ENCODE measurements at regions of chr5 and their contacts with region 1.

Region 1: GRCh38 chr5:111223889-111224563 is at the start of gene CAMK4:
- DNase-seq: peak; percentile 80 to 88 (median 84)
- H3K4me3 ChIP-seq: peak within 1 kb of the TSS; percentile 85
- H3K4me3 Mint-ChIP-seq: peak within 1 kb of the TSS; percentile 89 to 98 (median 98)
- H3K27ac ChIP-seq: peak within 1 kb of the TSS; percentile 52
- H3K27ac Mint-ChIP-seq: peak within 1 kb of the TSS; percentile 86 to 98 (median 94)
- H3K4me1 ChIP-seq: peaks cover 20% of the 10 kb centered on the region
- H3K4me1 Mint-ChIP-seq: peaks cover 37 to 40% (median 38%) of the 10 kb centered on the region in 3 donors
- H3K27me3 ChIP-seq: no peaks in the 10 kb centered on the region
- H3K27me3 Mint-ChIP-seq: peaks cover 0 to 1% of the 10 kb centered on the region in 2 donors
- total RNA-seq, gene CAMK4: 57.4 to 68.7 TPM

Region 2: GRCh38 chr5:111158105-111158744 is 65.8 kb before region 1 on chr5:
- CTCF ChIA-PET with region 1: interaction called, 17 read pairs
- POLR2A ChIA-PET with region 1: interaction called, 3 read pairs
- DNase-seq: peak; percentile 61 to 82 (median 66)
- H3K4me3 ChIP-seq: no peak overlapping the region
- H3K4me3 Mint-ChIP-seq: no peak overlapping the region
- H3K27ac ChIP-seq: no peak overlapping the region
- H3K27ac Mint-ChIP-seq: no peak overlapping the region
- H3K4me1 ChIP-seq: no peaks in the 10 kb centered on the region
- H3K4me1 Mint-ChIP-seq: peaks cover 4 to 11% (median 5%) of the 10 kb centered on the region in 3 donors
- H3K27me3 ChIP-seq: no peaks in the 10 kb centered on the region
- H3K27me3 Mint-ChIP-seq: peaks cover 0 to 12% of the 10 kb centered on the region in 2 donors

Region 3: DNA sequence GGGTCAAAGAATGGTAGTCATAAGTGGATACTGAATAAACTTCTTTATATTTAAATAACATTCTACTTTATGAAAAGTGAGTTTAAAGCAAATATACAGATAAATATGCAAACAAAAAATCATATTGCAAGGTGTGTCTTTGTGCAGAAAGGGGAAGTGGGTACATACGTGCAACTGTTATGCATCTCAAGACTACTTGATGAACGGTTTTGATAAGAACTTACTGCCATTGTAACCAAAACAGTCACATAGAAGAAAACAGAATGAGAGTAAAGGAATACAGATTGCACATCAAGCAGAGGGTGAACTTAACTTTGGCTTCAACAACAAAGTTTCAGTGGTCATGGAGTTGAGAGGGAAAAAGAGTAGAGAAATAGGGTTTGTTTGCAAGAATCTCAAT is 10.1 kb after region 1 on chr5:
- CTCF ChIA-PET with region 1: interaction called, 26 read pairs
- POLR2A ChIA-PET with region 1: interaction called, 6 read pairs
- DNase-seq: peak in 1 of 5 donors; percentile 61
- H3K4me3 ChIP-seq: peak overlapping the region; percentile 16
- H3K4me3 Mint-ChIP-seq: peak overlapping the region; percentile 8 to 80 (median 74)
- H3K27ac ChIP-seq: no peak overlapping the region
- H3K27ac Mint-ChIP-seq: peak overlapping the region; percentile 75 to 99 (median 92)
- H3K4me1 ChIP-seq: peaks cover 95% of the 10 kb centered on the region
- H3K4me1 Mint-ChIP-seq: peaks cover 96 to 100% (median 96%) of the 10 kb centered on the region in 3 donors
- H3K27me3 ChIP-seq: no peaks in the 10 kb centered on the region
- H3K27me3 Mint-ChIP-seq: no peaks in the 10 kb centered on the region

Region 4: GRCh38 chr5:111254613-111255012 is 30.6 kb after region 1 on chr5:
- CTCF ChIA-PET with region 1: interaction called, 13 read pairs
- POLR2A ChIA-PET with region 1: interaction called, 4 read pairs
- DNase-seq: peak; percentile 38 to 74 (median 61)
- H3K4me3 ChIP-seq: no peak overlapping the region
- H3K4me3 Mint-ChIP-seq: peak overlapping the region; percentile 28 to 82 (median 70)
- H3K27ac ChIP-seq: no peak overlapping the region
- H3K27ac Mint-ChIP-seq: peak overlapping the region; percentile 82 to 95 (median 90)
- H3K4me1 ChIP-seq: peaks cover 80% of the 10 kb centered on the region
- H3K4me1 Mint-ChIP-seq: peaks cover 64 to 82% (median 74%) of the 10 kb centered on the region in 3 donors
- H3K27me3 ChIP-seq: no peaks in the 10 kb centered on the region
- H3K27me3 Mint-ChIP-seq: no peaks in the 10 kb centered on the region